Left colon (tissue), 2 donors: ENCODE measurements at regions of chr20 and their contacts with region 1.

Region 1: DNA sequence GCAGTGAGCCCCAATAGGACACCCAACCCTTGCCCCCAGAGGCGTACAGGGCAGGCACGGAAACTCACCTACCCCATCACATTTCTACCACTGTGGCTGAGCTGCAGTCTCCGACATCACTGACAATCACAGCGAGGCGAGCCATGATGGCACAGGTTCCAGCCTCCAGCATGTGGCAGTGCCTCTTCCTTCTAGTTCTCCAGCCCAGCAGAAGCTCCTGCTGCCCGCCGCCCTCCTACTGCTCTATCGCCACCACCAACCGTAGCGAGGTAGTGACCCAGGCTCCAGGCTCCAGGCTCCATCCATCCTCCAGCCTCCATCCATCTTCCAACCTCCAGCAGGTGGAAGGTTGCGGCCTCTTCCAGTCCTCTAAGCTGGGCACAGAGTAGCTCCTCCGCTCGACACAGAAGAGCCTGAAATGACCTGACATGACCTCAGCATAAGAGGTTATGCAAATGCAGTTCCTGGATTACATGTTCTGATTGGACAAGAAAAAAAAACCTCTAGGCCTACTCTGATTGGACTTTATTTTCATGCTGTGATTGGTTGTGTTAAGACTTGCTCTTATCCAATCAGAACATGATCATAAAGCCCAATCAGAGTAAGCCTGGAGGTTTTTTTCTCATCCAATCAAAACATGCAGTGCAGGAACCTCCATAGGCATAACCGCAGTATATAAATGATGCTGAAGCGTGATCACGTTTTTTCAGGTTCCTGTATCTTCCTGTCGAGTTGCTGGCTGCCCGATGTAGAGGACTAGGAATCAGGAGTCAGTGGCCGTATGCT is 438.9 kb upstream of the ZNF337 start:
- DNase-seq: no peak
- ATAC-seq: no peak

Region 2: GRCh38 chr20:25508078-25508770 is 627.3 kb before region 1 on chr20:
- intact Hi-C with region 1: no loop called
- DNase-seq: peak; percentile 40 to 42
- ATAC-seq: peak; percentile 94

Region 3: GRCh38 chr20:25761596-25761995 is 373.9 kb before region 1 on chr20:
- intact Hi-C with region 1: no loop called
- DNase-seq: no peak
- ATAC-seq: no peak

Region 4: DNA sequence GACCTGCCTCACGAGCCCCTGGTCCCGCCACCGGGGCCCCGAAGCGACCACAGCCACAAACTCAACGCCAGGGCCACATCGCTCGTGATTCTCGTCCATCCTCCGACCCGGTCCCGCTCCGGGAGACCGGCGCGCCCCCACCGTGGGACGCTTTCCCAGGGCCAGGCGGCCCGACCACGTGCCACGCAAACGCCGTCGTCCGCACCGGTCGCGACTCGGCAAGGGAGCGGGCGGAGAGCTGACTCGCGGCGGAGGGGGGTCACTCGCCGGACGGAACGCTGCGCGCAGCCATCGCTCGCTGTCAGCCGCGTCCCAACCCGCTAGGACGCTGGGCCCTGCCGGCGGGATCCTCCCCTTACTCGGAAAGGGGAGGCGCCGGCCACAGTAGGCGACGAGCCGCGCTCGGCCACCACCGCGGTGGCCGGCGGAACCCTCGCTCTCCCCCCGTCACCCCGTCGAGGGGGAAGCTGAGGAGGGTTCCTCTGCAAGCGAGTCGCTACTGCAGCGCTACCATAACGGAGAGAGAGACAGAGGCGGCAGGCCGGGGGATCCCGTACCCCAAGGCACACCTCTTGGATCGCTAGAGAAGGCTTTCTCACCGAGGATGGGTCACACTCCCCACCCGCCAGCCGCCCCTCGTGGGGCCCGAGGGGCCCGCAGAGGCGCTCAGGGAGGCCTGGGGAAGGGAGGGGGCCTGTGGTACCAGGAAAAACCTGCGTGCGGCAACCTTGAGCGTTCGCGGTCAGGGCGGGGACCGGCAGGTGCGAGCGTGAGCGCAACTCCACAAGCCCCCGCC is 73.0 kb after region 1 on chr20:
- intact Hi-C with region 1: loop called in 1 of 2 experiments (anchors 10 kb)
- DNase-seq: no peak
- ATAC-seq: no peak

Region 5: DNA sequence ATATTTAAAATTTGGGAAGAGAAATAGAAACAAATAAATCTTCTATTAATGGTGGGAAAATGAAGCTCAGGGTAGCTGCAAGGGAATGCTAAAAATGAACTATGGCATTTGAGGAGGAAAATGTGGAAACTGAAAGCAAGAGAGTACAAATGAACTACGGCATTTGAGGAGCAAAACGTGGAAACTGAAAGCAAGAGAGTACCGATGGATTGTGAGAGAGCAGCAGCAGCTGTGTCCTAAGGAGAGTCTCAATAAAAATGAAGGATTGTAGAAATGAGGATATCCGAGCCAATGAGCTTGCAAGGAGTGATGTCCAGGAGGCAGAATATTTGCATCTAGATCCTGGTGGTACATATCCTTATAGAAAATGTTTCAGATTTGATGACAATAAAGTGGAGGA is 108.2 kb after region 1 on chr20:
- intact Hi-C with region 1: no loop called
- DNase-seq: no peak
- ATAC-seq: no peak

Region 6: DNA sequence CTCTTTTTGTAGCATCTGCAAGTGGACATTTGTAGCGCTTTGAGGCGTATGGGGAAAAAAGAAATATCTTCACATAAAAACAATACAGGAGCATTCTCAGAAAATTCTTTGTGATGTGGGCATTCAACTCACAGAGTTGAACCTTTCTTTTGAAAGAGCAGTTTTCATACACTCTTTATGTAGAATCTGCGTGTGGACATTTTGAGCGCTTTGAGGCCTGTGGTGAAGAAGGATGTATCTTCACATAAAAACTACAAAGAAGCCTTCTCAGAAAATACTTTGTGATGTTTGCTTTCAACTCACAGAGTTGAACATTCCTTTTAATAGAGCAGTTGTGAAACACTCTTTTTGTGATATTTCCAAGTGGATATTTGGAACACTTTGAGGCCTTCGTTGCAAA is 159.5 kb after region 1 on chr20:
- intact Hi-C with region 1: no loop called
- DNase-seq: no peak
- ATAC-seq: no peak